H1 (cell line): ENCODE measurements at regions of chr12 and their contacts with region 1.

Region 1: DNA sequence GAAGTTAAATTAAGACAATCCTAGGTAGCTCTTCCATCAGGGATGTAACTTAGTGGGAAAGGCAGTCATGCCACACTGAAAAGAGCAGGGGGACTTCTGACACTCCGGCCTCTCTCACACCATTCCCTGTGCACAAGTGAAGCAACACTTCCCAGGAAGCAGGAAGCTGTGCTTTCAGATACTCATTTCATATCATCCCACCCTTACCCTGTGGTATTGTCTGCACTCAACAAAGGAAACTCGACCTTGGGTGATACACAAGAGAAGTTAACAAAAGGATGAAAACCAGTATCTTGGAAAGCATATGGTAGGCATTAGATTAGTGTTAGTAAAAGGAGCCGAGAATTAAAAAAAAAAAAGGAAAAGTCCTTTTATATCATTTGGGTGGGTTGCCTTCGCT is 61.3 kb upstream of the MDM1 start:
- DNase-seq: no peak
- H3K4me3 ChIP-seq: no peak overlapping the region
- H3K27ac ChIP-seq: no peak overlapping the region
- H3K4me1 ChIP-seq: no peaks in the 10 kb centered on the region
- H3K27me3 ChIP-seq: no peaks in the 10 kb centered on the region
- CTCF ChIP-seq: no peak
- EP300 ChIP-seq: no peak
- POLR2A ChIP-seq: no peak
- RAD21 ChIP-seq: no peak

Region 2: DNA sequence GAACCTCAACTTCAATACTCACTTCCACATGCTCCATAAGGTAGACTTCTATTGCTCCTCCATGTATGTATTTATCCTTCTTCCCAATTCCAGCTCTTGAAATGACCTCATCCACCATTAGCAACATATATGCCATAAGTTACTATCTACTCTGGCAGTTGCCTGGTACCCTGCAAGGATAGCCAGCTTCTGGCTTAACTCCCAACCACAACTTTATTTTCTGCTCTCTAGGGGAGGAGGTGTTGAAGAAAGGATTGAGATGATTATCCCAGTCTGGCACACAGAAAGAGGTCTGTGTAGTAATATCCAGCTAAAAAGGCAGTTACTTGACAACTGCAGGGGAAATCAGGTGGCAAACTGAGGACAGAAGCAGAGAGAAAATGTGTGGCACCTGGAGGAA is 10.3 kb after region 1 on chr12:
- CTCF ChIA-PET with region 1: interaction called, 11 read pairs
- POLR2A ChIA-PET with region 1: interaction called, 3 read pairs
- DNase-seq: no peak
- H3K4me3 ChIP-seq: no peak overlapping the region
- H3K27ac ChIP-seq: no peak overlapping the region
- H3K4me1 ChIP-seq: peaks cover 0 to 2% (median 0%) of the 10 kb centered on the region in 4 experiments; a peak in 2 of 7 replicates
- H3K27me3 ChIP-seq: no peaks in the 10 kb centered on the region
- CTCF ChIP-seq: no peak
- EP300 ChIP-seq: no peak
- POLR2A ChIP-seq: no peak
- RAD21 ChIP-seq: no peak